Spleen (tissue), 13 donors: ENCODE measurements at regions of chr4 and their contacts with region 1.

Region 1: DNA sequence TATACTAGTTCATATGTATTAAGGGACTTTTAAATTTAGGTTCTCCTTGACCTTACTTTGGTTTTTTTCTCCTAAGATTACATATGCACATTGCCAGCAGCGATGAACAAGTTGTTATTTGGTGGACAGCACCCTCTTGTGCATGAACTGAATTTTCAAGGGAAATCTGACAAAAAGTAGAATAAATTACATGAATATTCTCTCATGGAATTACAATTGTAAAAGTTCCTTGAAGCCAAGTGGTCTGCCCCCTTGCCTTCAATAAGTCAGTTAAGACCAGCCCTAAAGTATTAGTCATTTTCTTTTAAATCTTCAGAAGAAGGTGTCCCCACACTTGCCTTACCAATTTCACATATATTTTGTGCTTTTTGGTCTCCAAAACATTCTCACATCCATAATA is 30.7 kb upstream of the SMARCA5 start:
- DNase-seq: no peak
- H3K4me3 ChIP-seq: no peak overlapping the region
- H3K27ac ChIP-seq: no peak overlapping the region
- H3K4me1 ChIP-seq: no peaks in the 10 kb centered on the region
- H3K27me3 ChIP-seq: no peaks in the 10 kb centered on the region
- CTCF ChIP-seq: peak; percentile 17 to 62 (median 45)
- POLR2A ChIP-seq: no peak

Region 2: GRCh38 chr4:143207557-143207956 is 275.3 kb before region 1 on chr4:
- intact Hi-C with region 1: loop called (anchors 10 kb)
- DNase-seq: no peak
- H3K4me3 ChIP-seq: no peak overlapping the region
- H3K27ac ChIP-seq: no peak overlapping the region
- H3K4me1 ChIP-seq: no peaks in the 10 kb centered on the region
- H3K27me3 ChIP-seq: no peaks in the 10 kb centered on the region
- CTCF ChIP-seq: peak in 5 of 11 experiments; percentile 12 to 42 (median 32)
- POLR2A ChIP-seq: no peak